Common myeloid progenitor, CD34-positive (primary cell): ENCODE measurements at regions of chr7 and their contacts with region 1.

Region 1: GRCh38 chr7:101614939-101615302 is 14.2 kb downstream of the MYL10 start:
- DNase-seq: no peak
- H3K4me3 ChIP-seq: no peak overlapping the region
- H3K27ac ChIP-seq: no peak overlapping the region
- H3K4me1 ChIP-seq: peaks cover 0 to 7% (median 0%) of the 10 kb centered on the region in 4 experiments
- H3K27me3 ChIP-seq: peaks cover 0 to 2% (median 0%) of the 10 kb centered on the region in 5 experiments

Region 2: GRCh38 chr7:101602484-101603241 is 12.3 kb before region 1 on chr7:
- CTCF ChIA-PET with region 1: interaction called, 10 read pairs
- POLR2A ChIA-PET with region 1: no interaction called
- DNase-seq: peak; percentile 79 to 88 (median 79)
- H3K4me3 ChIP-seq: no peak overlapping the region
- H3K27ac ChIP-seq: no peak overlapping the region
- H3K4me1 ChIP-seq: no peaks in the 10 kb centered on the region
- H3K27me3 ChIP-seq: no peaks in the 10 kb centered on the region